ENCODE measurements at regions of chr6 and their contacts with region 1.

Region 1: DNA sequence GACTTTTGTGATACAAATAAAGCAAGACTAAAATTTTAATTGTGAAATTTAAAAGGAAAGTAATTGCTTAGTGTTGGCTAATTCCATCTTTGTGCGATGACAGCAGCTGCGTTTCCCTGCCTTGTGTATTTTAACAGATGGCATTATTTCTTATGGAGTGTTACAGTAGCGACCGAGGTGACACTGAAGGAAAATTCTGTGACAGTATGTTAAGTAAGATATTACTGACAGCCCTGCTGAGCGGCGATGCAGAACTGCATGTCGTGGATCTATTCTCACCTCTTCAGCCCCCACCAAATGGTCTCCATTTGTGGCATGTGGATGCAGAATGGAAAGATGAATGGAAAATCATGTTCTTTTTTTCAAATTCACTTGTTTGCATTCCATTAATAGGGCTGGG is 289.4 kb downstream of the RNF144B start:
- DNase-seq: no peak
- H3K4me3 ChIP-seq: no peak overlapping the region
- H3K27ac ChIP-seq: no peak overlapping the region
- H3K4me1 ChIP-seq: peaks cover 6% of the 10 kb centered on the region
- H3K27me3 ChIP-seq: no peaks in the 10 kb centered on the region
- CTCF ChIP-seq: no peak

Region 2: DNA sequence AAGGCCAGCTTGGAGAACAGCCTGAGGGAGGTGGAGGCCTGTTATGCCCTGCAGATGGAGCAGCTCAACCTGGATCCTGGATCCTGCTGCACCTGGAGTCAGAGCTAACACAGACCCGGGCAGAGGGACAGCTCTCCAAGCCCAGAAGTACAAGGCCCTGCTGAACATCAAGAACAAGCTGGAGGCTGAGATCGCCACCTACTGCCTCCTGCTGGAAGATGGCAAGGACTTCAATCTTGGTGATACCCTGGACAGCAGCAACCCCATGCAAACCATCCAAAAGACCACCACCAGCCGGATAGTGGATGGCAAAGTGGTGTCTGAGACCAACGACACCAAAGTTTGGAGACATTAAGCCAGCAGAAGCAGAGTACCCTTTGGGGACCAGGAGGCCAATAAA is 937.1 kb after region 1 on chr6:
- CTCF ChIA-PET with region 1: interaction called, 16 read pairs
- POLR2A ChIA-PET with region 1: no interaction called
- intact Hi-C with region 1: no loop called
- DNase-seq: no peak
- H3K4me3 ChIP-seq: no peak overlapping the region
- H3K27ac ChIP-seq: no peak overlapping the region
- H3K4me1 ChIP-seq: no peaks in the 10 kb centered on the region
- H3K27me3 ChIP-seq: no peaks in the 10 kb centered on the region
- CTCF ChIP-seq: peak; percentile 29; the same call in 1 of the 2 replicates

Measured in A673 (cell line).